ENCODE measurements at regions of chr5 and their contacts with region 1.

Region 1: GRCh38 chr5:458547-459353 is 15.8 kb downstream of the EXOC3 start:
- DNase-seq: no peak
- ATAC-seq: peak; percentile 52; the same call in 1 of the 2 replicates
- H3K4me3 ChIP-seq: no peak overlapping the region
- H3K27ac ChIP-seq: no peak overlapping the region
- H3K4me1 ChIP-seq: peaks cover 0 to 12% of the 10 kb centered on the region in 2 experiments; a peak in 2 of 4 replicates
- H3K27me3 ChIP-seq: no peaks in the 10 kb centered on the region
- CTCF ChIP-seq: no peak
- POLR2A ChIP-seq: no peak
- RAD21 ChIP-seq: no peak

Region 2: GRCh38 chr5:611721-612486 is 153.2 kb after region 1 on chr5 and contains the start of gene CEP72:
- CTCF ChIA-PET with region 1: no interaction called
- POLR2A ChIA-PET with region 1: no interaction called
- RAD21 ChIA-PET with region 1: no interaction called
- intact Hi-C with region 1: loop called (anchors 10 kb)
- DNase-seq: peak; percentile 52
- ATAC-seq: peak; percentile 91
- H3K4me3 ChIP-seq: peak within 1 kb of the TSS; percentile 72 to 93
- H3K27ac ChIP-seq: peak within 1 kb of the TSS; percentile 68
- H3K4me1 ChIP-seq: peaks cover 0 to 16% of the 10 kb centered on the region in 2 experiments; a peak in 2 of 4 replicates
- H3K27me3 ChIP-seq: no peaks in the 10 kb centered on the region
- CTCF ChIP-seq: no peak
- POLR2A ChIP-seq: no peak
- RAD21 ChIP-seq: no peak
- total RNA-seq, gene CEP72: 25.6 TPM